Common myeloid progenitor, CD34-positive (primary cell): ENCODE measurements at regions of chr1 and their contacts with region 1.

Region 1: DNA sequence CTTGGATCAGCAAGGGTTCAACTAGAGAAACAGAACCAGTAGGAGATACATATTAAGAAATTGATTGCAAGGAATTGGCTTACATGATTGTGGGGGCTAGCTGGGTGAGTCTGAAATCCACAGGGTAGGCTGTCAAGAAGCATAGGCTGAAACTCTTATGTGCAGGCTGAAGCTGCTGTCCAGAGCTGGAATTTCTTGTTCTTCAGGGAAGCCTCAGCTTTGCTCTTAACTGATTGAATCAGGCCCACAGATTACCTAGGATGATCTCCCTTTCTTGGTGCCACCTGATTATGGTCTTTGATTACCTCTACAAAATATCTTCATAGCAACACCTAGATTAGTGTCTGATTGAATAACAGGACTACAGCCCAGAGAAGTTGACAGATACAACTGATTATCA is 22.5 kb upstream of the FRRS1 start:
- DNase-seq: no peak
- H3K4me3 ChIP-seq: no peak overlapping the region
- H3K27ac ChIP-seq: no peak overlapping the region
- H3K4me1 ChIP-seq: peaks cover 10 to 25% (median 16%) of the 10 kb centered on the region in 4 experiments
- H3K27me3 ChIP-seq: peaks cover 0 to 12% (median 7%) of the 10 kb centered on the region in 5 experiments

Region 2: GRCh38 chr1:101190441-101190840 is 1401.6 kb after region 1 on chr1:
- CTCF ChIA-PET with region 1: no interaction called
- POLR2A ChIA-PET with region 1: interaction called, 10 read pairs
- DNase-seq: no peak
- H3K4me3 ChIP-seq: no peak overlapping the region
- H3K27ac ChIP-seq: no peak overlapping the region
- H3K4me1 ChIP-seq: peaks cover 5 to 40% (median 17%) of the 10 kb centered on the region in 4 experiments
- H3K27me3 ChIP-seq: no peaks in the 10 kb centered on the region